ENCODE measurements at regions of chr17 and their contacts with region 1.

Region 1: DNA sequence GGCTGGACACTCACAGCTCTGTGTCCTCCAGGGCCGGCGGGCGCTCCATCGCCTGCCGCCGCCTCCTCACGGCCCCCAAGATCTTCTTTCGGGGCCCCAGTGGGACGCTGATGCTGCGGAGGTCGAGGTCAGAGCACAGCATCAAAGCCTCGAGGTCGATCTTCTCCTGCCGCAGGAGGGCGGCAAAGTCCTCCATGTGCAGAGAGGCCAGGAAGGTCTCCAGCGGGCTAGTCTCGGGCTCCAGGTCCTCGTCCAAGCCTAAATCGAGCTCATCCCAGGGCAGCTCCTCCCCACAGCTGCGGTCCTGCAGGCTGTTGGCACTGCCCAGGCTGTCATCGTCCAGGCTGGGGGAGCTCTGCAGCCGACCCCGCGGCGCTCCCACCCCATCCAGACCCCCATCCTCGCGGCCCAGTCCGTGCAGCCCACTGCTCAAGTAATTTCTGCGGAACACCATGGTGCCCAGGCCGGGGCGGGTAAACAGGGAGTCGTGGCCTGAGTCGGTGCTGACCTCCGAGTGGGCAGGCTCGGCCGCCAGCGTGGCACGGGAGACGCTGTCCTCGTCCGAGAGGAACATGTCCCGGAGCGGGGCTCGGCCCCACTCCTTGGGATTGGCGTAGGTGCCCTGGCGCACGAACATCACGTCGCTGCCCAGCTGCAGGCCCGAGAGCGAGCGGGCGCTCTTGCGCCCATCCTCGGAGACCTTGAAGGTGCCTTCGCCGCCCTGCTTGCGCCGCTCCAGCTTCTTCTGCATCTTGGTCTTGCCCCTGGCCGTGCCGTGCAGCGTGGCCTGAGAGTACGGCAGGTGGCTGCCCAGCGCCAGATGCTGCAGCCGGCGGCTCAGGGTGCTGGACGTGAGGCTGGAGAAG is 3.4 kb downstream of the USH1G start:
- DNase-seq: no peak
- ATAC-seq: no peak

Region 2: DNA sequence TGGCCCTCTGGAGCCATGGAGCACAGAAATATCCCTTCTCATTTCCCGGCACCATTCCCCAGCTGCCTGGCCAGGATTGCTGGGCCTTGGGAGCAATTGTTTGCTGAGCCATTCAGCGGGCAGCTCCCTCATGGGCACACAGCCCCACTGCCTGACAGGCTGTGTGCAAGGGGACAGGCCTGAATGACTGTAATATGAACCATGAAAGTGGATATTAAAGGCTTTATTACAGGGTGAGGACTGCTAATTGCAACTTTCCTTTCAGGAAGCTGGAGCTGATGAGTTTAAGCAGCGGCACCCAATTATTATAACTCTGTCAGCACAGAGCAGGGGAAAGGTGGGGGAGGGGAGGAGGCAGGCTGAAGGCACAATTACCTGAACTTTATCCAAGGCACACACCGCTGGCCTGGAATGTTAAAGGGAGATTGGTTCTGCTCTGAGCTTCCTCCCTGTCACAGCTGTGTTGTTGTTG is 1115.7 kb before region 1 on chr17:
- intact Hi-C with region 1: no loop called
- DNase-seq: no peak
- ATAC-seq: no peak

Region 3: GRCh38 chr17:75033346-75034235 is 113.9 kb after region 1 on chr17:
- intact Hi-C with region 1: no loop called
- DNase-seq: peak; percentile 98
- ATAC-seq: peak; percentile 89

Region 4: DNA sequence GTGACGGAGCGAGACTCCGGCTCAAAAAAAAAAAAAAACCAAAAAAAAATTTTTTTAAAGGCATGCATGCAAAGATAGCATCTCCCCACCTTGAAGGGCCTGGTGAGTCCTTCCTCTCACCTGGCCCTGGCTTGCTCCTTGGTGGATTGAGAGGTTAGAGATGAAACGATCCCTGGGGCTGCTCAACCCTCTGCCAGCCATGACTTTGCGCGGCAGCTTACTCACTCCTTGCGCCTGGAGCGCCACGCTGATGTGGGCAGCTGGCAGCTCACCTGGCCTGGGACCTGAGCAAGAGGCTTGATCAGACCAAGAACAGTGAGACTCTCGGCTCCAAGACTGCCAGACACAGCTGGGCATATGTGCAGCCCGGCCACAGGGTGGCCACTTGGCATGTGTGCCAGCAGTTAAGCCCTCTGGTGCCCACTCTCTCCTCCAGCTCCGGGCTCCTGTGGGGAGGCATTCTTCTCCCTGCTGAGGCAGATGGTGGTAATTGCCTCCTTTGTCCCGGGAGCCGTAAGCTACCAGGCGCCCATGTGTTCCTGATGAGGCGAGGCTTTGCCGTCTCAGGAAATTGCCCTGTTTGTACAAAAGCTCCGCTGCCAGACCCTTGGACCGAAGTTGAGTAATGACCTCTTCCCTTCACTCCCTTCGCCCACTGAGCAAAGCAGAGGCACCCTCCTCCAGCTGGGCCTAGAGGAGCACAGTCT is 1112.6 kb after region 1 on chr17:
- intact Hi-C with region 1: loop called (anchors 10 kb)
- DNase-seq: no peak
- ATAC-seq: no peak

Measured in sciatic nerve (tissue), 2 donors.